ENCODE measurements at regions of chr15 and their contacts with region 1.

Region 1: GRCh38 chr15:62999923-63000561 is 42.5 kb upstream of the TPM1 start:
- DNase-seq: peak in 2 of 5 donors; percentile 46 to 63
- ATAC-seq: peak; percentile 70 to 81 (median 76)
- H3K4me3 ChIP-seq: no peak overlapping the region
- H3K27ac ChIP-seq: peak overlapping the region; percentile 50 to 94 (median 74)
- H3K4me1 ChIP-seq: peaks cover 0 to 25% (median 2%) of the 10 kb centered on the region in 12 donors
- H3K27me3 ChIP-seq: no peaks in the 10 kb centered on the region
- CTCF ChIP-seq: no peak
- POLR2A ChIP-seq: no peak

Region 2: DNA sequence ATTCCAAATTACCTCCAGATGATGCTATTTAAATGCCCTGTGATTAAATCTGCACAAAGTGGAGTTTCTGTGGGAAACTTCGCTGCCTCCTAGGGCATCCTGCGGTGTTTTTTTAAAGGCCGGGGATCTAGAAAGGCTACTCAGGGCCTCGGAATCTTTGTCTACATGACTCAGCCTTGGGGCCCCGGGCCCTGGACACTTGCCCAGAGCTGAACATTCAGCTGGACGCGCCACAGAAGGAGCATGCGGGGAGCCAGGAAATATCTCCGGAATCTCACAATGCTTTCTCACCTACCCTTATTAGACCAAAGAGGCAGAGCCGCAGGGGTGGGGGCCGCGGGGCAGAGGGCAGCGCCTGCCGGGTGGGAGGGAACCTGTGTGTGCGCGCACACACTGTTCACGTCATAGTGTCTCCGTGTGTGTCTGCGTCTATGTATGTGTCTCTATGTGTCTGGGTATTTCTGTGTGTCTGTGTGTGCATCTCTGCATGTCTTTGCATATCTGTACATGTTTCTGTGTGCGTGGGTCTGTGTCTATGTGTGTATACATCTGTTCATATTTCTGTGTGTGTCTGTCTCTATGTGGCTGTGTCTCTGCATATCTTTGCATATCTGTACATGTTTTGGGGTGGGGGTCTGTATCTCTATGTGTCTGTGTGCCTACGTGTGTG is 102.9 kb before region 1 on chr15:
- intact Hi-C with region 1: loop called in 1 of 10 experiments (anchors 2 kb)
- DNase-seq: peak; percentile 92 to 95 (median 94)
- ATAC-seq: peak; percentile 72 to 88 (median 85)
- H3K4me3 ChIP-seq: peak overlapping the region in 7 of 12 donors; percentile 6 to 34 (median 20)
- H3K27ac ChIP-seq: peak overlapping the region; percentile 78 to 97 (median 90)
- H3K4me1 ChIP-seq: peaks cover 3 to 73% (median 37%) of the 10 kb centered on the region in 12 donors
- H3K27me3 ChIP-seq: no peaks in the 10 kb centered on the region
- CTCF ChIP-seq: no peak
- POLR2A ChIP-seq: peak in 1 of 2 donors; percentile 17

Region 3: DNA sequence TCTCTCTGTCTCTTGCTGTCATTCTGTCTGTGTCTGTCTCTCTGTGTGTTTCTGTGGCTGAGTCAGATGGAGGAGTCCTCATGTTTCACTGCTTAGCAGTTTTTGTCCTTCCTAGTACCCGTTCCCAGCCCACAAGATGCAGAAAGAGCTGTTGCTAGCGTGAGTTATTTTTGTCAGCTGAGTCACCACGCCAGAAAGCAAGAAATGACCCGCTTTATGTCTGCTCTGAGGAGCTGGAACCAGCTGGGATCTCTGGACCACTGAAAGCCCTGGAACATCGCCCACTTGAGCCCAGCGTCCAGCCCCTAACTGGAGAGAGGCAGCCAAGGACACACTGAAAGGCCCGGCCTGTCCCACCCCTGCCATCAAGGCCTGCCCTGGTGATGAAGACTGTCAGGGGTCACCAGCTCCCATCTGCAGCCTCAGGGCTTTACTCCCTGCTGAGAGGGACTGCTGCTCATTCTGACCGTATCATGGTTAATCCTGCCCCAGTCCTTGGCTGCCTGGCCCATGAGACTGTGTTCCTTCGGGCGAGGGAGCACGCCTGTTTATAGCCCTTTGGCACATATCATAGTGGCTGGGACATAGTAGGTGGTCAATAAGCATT is 59.2 kb before region 1 on chr15:
- intact Hi-C with region 1: no loop called
- DNase-seq: peak; percentile 82 to 92 (median 89)
- ATAC-seq: peak; percentile 88 to 94 (median 94)
- H3K4me3 ChIP-seq: peak overlapping the region in 1 of 12 donors; percentile 3
- H3K27ac ChIP-seq: peak overlapping the region; percentile 72 to 90 (median 85)
- H3K4me1 ChIP-seq: peaks cover 0 to 33% (median 25%) of the 10 kb centered on the region in 12 donors
- H3K27me3 ChIP-seq: no peaks in the 10 kb centered on the region
- CTCF ChIP-seq: no peak
- POLR2A ChIP-seq: no peak

Region 4: DNA sequence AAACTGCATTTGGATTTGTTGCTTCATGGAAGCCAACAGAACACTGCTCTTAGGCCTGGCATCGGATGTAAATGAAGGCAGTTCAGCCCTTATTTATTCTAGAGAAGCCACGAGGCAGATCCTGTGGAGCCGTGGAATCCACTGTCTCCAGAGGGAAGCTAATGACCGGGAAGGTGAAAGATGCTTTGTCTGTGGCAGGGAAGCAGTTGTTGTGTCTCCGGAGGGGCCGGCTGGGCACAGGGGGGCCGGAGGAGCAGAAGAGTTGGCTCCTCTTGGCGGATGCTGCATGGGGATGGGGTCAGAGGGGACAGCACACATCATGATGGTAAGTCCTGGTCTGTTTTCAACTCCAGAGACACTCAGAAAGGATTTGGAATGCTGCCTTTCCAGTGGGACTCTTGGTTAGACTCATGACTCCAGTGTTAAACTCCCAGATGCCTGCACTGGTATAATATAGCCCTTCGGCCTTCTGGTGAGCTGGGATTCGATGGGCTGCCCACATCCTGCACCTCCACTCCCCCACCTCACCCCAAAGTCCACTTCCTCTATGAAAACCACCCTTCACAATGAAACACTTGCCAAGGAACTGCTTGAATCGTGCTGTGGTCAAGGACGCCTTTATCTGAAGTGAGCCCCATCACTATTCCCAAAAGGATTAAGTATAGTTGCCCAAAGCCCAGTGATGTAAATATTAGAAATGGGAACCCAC is 76.1 kb after region 1 on chr15:
- intact Hi-C with region 1: loop called in 1 of 10 experiments (anchors 2 kb)
- DNase-seq: no peak
- ATAC-seq: no peak
- H3K4me3 ChIP-seq: no peak overlapping the region
- H3K27ac ChIP-seq: peak overlapping the region in 1 of 12 donors; percentile 80
- H3K4me1 ChIP-seq: peaks cover 0 to 34% (median 10%) of the 10 kb centered on the region in 12 donors
- H3K27me3 ChIP-seq: no peaks in the 10 kb centered on the region
- CTCF ChIP-seq: no peak
- POLR2A ChIP-seq: no peak

Measured in heart left ventricle (tissue), 16 donors.